Posterior cingulate gyrus (tissue), 11 donors: ENCODE measurements at regions of chr4 and their contacts with region 1.

Region 1: GRCh38 chr4:98298022-98298421 is 36.8 kb downstream of the RAP1GDS1 start:
- DNase-seq: no peak

Region 2: DNA sequence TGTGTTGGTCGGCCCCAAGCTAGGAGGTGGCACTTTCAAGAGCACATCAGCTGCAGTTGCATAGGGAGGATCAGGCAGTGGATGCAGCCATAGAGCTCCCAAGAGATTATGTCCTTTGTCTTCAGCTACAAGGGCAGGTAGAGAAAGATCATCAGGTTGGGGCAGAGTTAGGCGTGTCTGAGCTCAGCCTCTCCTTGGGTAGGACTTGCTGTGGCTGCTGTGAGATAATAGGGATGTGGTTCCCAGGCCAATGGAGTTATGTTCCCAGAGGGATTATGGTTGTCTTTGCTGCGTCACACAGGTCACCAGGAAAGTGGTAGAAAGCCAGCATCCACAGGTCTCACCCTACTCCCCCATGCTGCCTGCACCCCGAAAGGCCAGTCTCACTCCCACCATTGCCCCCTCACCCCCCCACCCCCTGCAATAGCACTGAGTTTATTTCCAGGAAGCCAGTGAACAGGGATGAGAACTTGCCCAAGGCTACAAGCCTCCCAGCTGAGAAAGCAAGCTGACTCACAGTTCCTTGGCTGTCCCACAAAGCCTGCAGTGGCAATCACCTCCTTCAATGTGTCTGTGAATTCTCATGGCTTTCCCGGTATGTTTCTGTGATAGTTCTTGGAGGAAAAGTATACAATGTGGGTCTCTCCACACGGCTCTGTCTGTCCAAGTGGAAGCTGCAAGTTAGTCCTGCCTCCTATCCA is 303.1 kb before region 1 on chr4:
- intact Hi-C with region 1: no loop called
- DNase-seq: no peak

Region 3: DNA sequence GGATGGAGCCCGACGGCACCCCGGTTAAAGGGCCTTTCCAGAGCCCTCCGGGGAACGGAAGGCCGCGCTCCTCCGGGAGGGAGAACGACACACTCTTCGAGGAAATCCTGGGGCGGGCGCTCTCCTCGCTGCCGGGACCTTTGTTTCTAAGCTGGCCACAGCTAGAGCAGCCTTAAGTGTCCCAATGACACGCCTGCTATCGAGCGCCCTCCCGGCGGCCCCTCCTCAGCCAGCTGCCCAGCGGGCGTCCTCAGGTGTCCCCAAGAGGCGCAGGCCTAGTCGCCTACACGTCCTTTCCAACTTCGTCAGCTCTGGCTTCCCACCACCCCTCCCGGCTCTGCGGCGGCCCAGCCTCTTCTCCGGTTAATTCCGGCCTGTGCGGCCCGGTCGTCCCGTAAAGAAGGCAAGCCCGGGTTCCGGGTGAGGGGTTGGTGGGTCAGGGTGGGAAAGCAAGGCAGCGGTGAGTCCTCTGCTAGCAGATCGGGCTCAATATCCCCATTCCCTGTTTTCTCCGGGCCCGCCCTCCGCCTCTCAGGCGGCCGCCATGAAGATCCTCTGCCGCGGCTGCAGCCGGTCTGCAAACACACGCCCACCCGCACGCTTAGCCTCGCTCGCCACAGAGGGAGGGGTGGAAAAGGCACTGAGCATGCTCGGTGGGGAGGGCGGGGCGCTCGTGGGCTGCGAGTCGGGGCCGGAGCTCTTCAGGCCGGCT is 37.3 kb before region 1 on chr4:
- intact Hi-C with region 1: loop called (anchors 5 kb)
- DNase-seq: peak; percentile 91 to 99 (median 93)

Region 4: DNA sequence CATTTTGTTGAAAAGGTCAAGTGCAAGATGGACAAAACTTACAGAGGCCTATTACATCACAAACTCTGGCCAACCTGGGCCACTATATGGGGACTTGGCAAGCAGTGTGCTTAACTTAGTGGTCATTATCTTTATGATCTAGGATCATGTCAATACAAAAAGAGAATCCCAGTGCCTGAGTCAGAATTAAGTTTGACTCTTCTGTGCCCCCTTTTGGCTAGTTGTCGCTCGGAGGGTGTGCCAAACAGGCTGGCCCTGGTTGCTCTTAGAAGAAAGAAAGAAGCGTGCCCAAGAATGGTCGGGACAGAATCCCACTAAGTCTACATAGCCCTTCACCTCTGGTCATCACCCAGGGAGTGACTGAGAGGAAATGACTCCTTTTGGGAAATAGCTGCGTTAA is 530.8 kb after region 1 on chr4:
- intact Hi-C with region 1: no loop called
- DNase-seq: no peak